ENCODE measurements at regions of chr2 and their contacts with region 1.

Region 1: GRCh38 chr2:70190418-70191243 is at the start of gene C2orf42:
- DNase-seq: peak; percentile 99
- H3K4me3 ChIP-seq: peak within 1 kb of the TSS; percentile 83
- H3K27ac ChIP-seq: peak within 1 kb of the TSS; percentile 89
- H3K4me1 ChIP-seq: peaks cover 8% of the 10 kb centered on the region
- CTCF ChIP-seq: no peak; the same call in 1 of the 2 replicates
- total RNA-seq, gene C2orf42: 24.5 and 26.8 TPM in 2 replicates

Region 2: DNA sequence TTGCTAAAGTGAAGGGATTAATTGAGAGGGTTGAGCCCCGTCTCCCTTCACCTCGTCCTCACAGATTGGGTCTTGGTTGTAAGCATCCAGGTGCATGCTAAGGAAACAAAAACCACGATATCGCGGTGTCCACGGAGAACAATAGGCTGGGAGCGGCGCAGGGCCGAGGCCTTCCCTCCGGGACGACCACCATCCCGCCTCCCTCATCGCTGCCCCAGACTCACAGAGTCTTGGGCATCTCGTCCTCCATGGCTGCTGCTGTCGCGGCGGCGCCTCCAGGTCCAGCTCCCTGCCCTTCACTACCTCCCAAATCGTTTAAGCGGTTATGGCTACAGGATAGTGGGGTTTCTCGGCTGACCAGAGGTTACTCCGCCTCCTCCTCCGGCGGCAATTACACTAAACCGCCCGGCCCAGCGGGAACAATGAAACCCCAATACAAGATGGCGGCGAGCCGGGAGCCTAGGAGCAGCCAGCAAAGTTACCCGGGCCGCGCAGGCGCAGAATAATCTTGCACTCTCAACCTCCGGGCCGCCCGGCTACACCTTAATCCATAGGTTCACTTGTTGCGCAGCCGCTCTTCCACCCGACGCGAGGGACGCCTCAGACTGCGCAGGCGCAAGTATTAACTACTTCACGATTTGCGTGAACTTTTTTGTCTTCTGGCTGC is 57.7 kb after region 1 on chr2 and contains the start of gene TIA1:
- CTCF ChIA-PET with region 1: no interaction called
- POLR2A ChIA-PET with region 1: interaction called, 8 read pairs
- intact Hi-C with region 1: loop called (anchors 1 kb)
- DNase-seq: peak; percentile 100
- H3K4me3 ChIP-seq: peak within 1 kb of the TSS; percentile 86
- H3K27ac ChIP-seq: peak within 1 kb of the TSS; percentile 86
- H3K4me1 ChIP-seq: peaks cover 29% of the 10 kb centered on the region
- CTCF ChIP-seq: no peak
- total RNA-seq, gene TIA1: 129 and 147 TPM in 2 replicates

Region 3: GRCh38 chr2:70321370-70321769 is 130.7 kb after region 1 on chr2:
- CTCF ChIA-PET with region 1: no interaction called
- POLR2A ChIA-PET with region 1: no interaction called
- intact Hi-C with region 1: no loop called
- DNase-seq: no peak
- H3K4me3 ChIP-seq: no peak overlapping the region
- H3K27ac ChIP-seq: no peak overlapping the region
- H3K4me1 ChIP-seq: no peaks in the 10 kb centered on the region
- CTCF ChIP-seq: no peak

Region 4: DNA sequence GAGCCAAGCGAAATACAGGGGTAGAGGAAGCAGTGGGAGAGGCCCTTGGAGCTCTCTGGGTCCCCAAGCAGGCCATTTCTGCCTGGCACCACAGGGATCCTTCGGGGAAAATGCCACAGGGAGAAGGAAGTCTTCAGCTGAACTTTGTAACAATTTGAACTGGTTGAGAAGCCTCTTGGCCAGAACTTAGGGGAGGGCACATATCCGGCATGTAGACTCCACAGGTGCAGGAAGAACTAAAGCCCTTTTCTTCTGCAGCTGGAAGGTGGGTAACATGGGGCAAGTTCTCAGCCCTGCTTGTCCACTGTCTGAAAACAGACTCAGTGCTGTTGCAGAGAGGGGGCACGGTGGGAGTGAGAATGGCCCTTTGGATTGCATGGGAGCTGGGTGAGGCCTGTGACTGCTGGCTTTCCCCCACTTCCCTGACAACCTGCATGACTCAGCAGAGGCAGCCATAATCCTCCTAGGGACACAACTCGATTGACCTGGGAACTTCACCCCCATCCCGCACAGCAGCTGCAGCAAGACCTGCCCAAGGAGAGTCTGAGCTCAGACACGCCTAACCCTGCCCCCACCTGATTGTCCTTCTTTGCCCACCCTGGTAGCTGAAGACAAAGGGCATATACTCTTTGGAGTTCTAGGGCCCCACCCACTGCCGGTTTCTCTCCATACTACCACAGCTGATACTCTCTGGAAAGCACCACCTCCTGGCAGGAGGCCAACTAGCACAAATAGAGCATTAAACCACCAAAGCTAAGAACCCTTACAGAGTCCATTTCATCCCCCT is 212.8 kb after region 1 on chr2:
- CTCF ChIA-PET with region 1: no interaction called
- POLR2A ChIA-PET with region 1: no interaction called
- intact Hi-C with region 1: no loop called
- DNase-seq: no peak
- H3K4me3 ChIP-seq: no peak overlapping the region
- H3K27ac ChIP-seq: no peak overlapping the region
- H3K4me1 ChIP-seq: no peaks in the 10 kb centered on the region
- CTCF ChIP-seq: no peak